Posterior vena cava (tissue), 2 donors: ENCODE measurements at regions of chr6 and their contacts with region 1.

Region 1: DNA sequence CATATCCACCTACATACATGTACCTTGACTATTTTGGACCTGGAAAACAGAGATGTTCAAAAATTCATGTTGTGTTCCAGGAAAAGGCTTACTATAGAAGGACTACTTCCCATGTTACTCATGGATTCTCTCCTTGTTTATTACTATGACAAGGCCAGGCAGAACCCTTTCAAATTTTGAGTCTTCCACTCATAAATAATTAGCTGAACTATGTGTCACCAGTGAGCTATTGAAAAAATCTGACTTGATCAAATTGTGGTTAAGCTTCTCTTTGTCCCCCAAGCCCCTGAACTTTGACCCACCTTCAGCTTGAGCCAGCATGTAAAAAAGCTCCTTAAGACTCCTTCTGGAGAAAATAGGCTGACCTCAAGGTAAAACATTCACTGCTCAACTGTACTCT is 1142.8 kb upstream of the EYS start:
- DNase-seq: no peak

Region 2: GRCh38 chr6:66134021-66134420 is 715.8 kb before region 1 on chr6:
- intact Hi-C with region 1: loop called in 1 of 2 experiments (anchors 10 kb)
- DNase-seq: no peak

Region 3: GRCh38 chr6:66628917-66629316 is 220.9 kb before region 1 on chr6:
- intact Hi-C with region 1: no loop called
- DNase-seq: no peak